PC-9 (cell line): ENCODE measurements at regions of chr12 and their contacts with region 1.

Region 1: GRCh38 chr12:75712252-75712651 is 200.8 kb upstream of the KRR1 start:
- DNase-seq: peak in 1 of 2 experiments; percentile 79
- H3K4me3 ChIP-seq: no peak overlapping the region
- H3K27ac ChIP-seq: peak overlapping the region; percentile 63
- H3K4me1 ChIP-seq: peaks cover 39% of the 10 kb centered on the region
- H3K27me3 ChIP-seq: no peaks in the 10 kb centered on the region
- CTCF ChIP-seq: no peak

Region 2: DNA sequence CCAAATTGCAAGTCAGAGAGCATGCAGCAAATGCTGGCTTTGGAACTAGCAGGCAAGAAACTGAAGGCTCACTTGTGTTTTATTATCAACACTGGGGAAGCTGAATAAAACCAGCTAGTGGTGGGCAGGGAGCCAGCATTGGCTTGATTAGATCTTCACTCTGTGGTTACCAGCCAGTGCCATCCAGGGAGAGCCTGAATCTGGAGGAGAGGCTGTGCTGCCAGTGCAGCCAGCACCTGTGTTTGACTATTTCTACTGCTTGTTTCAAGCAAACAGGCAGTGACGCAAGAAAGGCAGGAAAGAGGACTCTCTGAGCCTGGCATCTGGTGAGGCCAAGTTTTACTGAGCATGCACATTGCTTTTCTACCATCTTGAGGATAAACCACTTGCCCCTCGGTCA is 72.3 kb after region 1 on chr12:
- CTCF ChIA-PET with region 1: no interaction called
- POLR2A ChIA-PET with region 1: no interaction called
- intact Hi-C with region 1: loop called (anchors 5 kb)
- DNase-seq: peak; percentile 83 to 84
- H3K4me3 ChIP-seq: no peak overlapping the region
- H3K27ac ChIP-seq: peak overlapping the region; percentile 21; the same call in 1 of the 2 replicates
- H3K4me1 ChIP-seq: peaks cover 40% of the 10 kb centered on the region
- H3K27me3 ChIP-seq: no peaks in the 10 kb centered on the region
- CTCF ChIP-seq: no peak